HepG2 (cell line): ENCODE measurements at regions of chr1 and their contacts with region 1.

Region 1: DNA sequence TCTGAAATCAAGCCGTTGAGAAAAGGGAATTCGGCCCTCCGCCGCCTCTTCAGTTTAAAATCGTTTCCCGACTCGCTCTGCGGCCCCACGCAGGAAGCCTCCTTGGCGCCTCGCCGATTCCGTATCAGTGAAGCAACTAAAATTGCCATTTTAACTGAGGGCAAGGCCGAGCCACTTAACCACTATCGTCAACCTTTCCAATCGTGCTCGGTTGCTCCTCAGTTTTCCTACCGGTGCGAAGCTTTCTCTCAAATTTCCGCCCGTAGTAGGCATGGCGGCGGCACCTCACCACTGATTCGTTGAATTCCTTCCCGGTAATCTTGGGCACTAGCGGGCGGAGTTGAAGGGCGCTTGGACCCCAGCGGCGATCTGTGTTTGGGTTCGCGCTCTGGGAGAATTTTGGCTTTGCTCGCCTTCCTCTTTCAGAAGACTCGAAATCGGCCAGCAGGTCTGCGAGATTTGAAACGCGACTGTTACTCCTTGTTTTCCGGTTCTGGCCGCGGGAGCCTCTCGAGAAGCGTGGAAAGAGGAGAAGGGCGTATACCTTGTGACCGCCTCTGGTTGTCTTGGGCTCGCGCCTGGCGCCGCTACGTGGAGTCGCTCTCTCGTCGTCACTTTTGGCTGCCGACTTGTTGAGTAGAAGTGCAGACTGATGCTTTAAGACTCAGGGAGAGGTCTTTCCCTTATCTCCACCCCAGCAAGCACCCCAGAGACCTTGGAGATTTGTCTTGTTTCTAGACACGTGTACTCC is at the starts of genes CENPL and DARS2:
- DNase-seq: peak; percentile 96
- ATAC-seq: peak; percentile 94
- H3K4me3 ChIP-seq: peak within 1 kb of the TSS; percentile 69 to 99 (median 80)
- H3K27ac ChIP-seq: peak within 1 kb of the TSS; percentile 89
- H3K4me1 ChIP-seq: peaks cover 45% of the 10 kb centered on the region
- H3K27me3 ChIP-seq: no peaks in the 10 kb centered on the region; a peak in 1 of 5 replicates
- CTCF ChIP-seq: no peak
- EP300 ChIP-seq: no peak; a peak in 1 of 4 replicates
- POLR2A ChIP-seq: peak; percentile 63 to 80
- RAD21 ChIP-seq: no peak
- total RNA-seq, gene CENPL: 14.2 and 17.9 TPM in 2 replicates
- total RNA-seq, gene DARS2: 27.7 and 45.4 TPM in 2 replicates

Region 2: GRCh38 chr1:173420330-173420806 is 404.1 kb before region 1 on chr1:
- CTCF ChIA-PET with region 1: no interaction called
- POLR2A ChIA-PET with region 1: no interaction called
- in situ Hi-C with region 1: loop called (anchors 5 kb)
- intact Hi-C with region 1: loop called (anchors 1 kb)
- DNase-seq: peak; percentile 64
- ATAC-seq: peak; percentile 90
- H3K4me3 ChIP-seq: no peak overlapping the region
- H3K27ac ChIP-seq: no peak overlapping the region
- H3K4me1 ChIP-seq: no peaks in the 10 kb centered on the region
- H3K27me3 ChIP-seq: no peaks in the 10 kb centered on the region
- CTCF ChIP-seq: peak; percentile 83
- EP300 ChIP-seq: no peak
- POLR2A ChIP-seq: no peak
- RAD21 ChIP-seq: peak; percentile 77

Region 3: DNA sequence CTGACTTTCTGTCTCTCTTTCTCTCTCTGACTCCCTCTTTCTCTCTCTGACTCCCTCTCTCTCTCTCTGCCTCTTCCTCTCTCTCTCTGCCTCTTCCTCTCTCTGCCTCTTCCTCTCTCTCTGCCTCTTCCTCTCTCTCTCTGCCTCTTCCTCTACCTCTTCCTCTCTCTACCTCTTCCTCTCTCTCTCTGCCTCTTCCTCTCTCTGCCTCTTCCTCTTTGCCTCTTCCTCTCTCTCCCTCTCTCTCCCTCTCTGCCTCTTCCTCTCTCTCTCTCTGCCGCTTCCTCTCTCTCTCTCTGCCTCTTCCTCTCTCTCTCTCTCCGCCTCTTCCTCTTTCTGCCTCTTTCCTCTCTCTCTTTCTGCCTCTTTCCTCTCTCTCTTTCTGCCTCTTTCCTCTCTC is 136.2 kb before region 1 on chr1:
- CTCF ChIA-PET with region 1: interaction called, 3 read pairs
- POLR2A ChIA-PET with region 1: no interaction called
- in situ Hi-C with region 1: no loop called
- intact Hi-C with region 1: loop called (anchors 1 kb)
- DNase-seq: no peak
- ATAC-seq: no peak
- H3K4me3 ChIP-seq: no peak overlapping the region
- H3K27ac ChIP-seq: no peak overlapping the region
- H3K4me1 ChIP-seq: no peaks in the 10 kb centered on the region; the same call in 1 of the 2 replicates
- H3K27me3 ChIP-seq: no peaks in the 10 kb centered on the region; a peak in 1 of 5 replicates
- CTCF ChIP-seq: no peak
- EP300 ChIP-seq: no peak
- POLR2A ChIP-seq: no peak
- RAD21 ChIP-seq: no peak

Region 4: GRCh38 chr1:173714759-173715537 is 109.6 kb before region 1 on chr1 and contains the start of gene KLHL20:
- CTCF ChIA-PET with region 1: no interaction called
- POLR2A ChIA-PET with region 1: interaction called, 7 read pairs
- in situ Hi-C with region 1: loop called (anchors 10 kb)
- intact Hi-C with region 1: loop called (anchors 1 kb)
- DNase-seq: peak; percentile 89
- ATAC-seq: peak; percentile 98
- H3K4me3 ChIP-seq: peak within 1 kb of the TSS; percentile 74 to 97 (median 84)
- H3K27ac ChIP-seq: peak within 1 kb of the TSS; percentile 74
- H3K4me1 ChIP-seq: peaks cover 31% of the 10 kb centered on the region
- H3K27me3 ChIP-seq: peaks cover 0 to 4% of the 10 kb centered on the region in 2 experiments; a peak in 2 of 5 replicates
- CTCF ChIP-seq: peak; percentile 41
- EP300 ChIP-seq: peak in 1 of 2 experiments; percentile 59; a peak in 2 of 4 replicates
- POLR2A ChIP-seq: peak; percentile 74 to 81
- RAD21 ChIP-seq: no peak; the same call in 1 of the 2 replicates
- total RNA-seq, gene KLHL20: 14.3 and 18.8 TPM in 2 replicates

Region 5: GRCh38 chr1:173853074-173853473 is 28.6 kb after region 1 on chr1:
- CTCF ChIA-PET with region 1: no interaction called
- POLR2A ChIA-PET with region 1: no interaction called
- in situ Hi-C with region 1: no loop called
- intact Hi-C with region 1: no loop called
- DNase-seq: no peak
- ATAC-seq: no peak
- H3K4me3 ChIP-seq: no peak overlapping the region
- H3K27ac ChIP-seq: no peak overlapping the region
- H3K4me1 ChIP-seq: no peaks in the 10 kb centered on the region
- H3K27me3 ChIP-seq: no peaks in the 10 kb centered on the region
- CTCF ChIP-seq: no peak
- EP300 ChIP-seq: no peak
- POLR2A ChIP-seq: no peak
- RAD21 ChIP-seq: no peak